B cell (primary cell): ENCODE measurements at regions of chr9 and their contacts with region 1.

Region 1: DNA sequence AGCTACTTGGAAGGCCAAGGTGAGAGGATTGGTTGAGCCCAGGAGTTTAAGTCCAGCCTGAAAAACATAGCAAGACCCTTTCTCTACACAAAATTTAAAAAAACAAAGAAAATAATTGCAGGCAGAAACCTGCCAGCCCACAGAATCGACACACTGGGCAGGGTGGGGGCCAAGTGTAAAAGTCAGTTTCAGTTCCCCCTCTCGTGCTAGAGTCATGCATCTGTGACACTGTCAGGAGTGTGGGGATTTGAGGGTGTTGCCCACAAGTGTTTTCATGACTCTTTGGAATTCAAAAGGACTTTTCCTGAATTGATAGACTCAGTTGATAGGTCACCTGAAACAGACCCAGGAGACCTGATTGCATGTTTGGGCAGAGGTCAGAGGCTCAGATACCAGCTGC is 47.6 kb downstream of the PRRC2B start:
- DNase-seq: peak; percentile 75
- ATAC-seq: peak; percentile 97
- H3K4me3 ChIP-seq: no peak overlapping the region
- H3K4me3 Mint-ChIP-seq: peak overlapping the region; percentile 11
- H3K27ac ChIP-seq: peak overlapping the region; percentile 13 to 70
- H3K27ac Mint-ChIP-seq: peak overlapping the region; percentile 76
- H3K4me1 ChIP-seq: peaks cover 19% of the 10 kb centered on the region in 2 donors
- H3K4me1 Mint-ChIP-seq: peaks cover 31% of the 10 kb centered on the region
- H3K27me3 ChIP-seq: no peaks in the 10 kb centered on the region
- H3K27me3 Mint-ChIP-seq: no peaks in the 10 kb centered on the region
- CTCF ChIP-seq: no peak

Region 2: DNA sequence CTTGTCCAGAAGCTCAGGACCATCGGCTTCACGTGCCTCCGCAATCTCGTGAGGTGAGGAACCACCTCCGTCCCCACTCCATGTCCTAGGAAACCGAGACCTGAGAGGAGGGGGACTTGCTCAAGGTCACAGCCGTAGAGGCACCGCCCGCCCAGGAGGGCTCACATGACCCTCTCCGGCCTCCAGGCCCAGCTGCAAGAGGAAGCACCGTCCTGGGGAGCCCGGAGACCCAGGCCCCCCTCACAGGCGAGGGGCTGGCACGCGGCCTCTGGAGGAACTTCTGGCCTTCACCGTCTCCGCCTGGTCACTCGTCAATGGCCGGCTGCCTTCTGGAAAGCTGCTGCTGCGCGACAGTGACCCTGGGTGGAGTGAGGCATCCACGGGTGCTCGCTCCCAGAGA is 189.3 kb before region 1 on chr9:
- CTCF ChIA-PET with region 1: no interaction called
- POLR2A ChIA-PET with region 1: no interaction called
- intact Hi-C with region 1: no loop called
- DNase-seq: no peak
- ATAC-seq: no peak
- H3K4me3 ChIP-seq: peak overlapping the region in 4 of 5 experiments; percentile 33 to 50 (median 36)
- H3K4me3 Mint-ChIP-seq: peak overlapping the region; percentile 78
- H3K27ac ChIP-seq: peak overlapping the region; percentile 42 to 95
- H3K27ac Mint-ChIP-seq: peak overlapping the region; percentile 32
- H3K4me1 ChIP-seq: peaks cover 48 to 57% of the 10 kb centered on the region in 2 donors
- H3K4me1 Mint-ChIP-seq: peaks cover 35% of the 10 kb centered on the region
- H3K27me3 ChIP-seq: no peaks in the 10 kb centered on the region
- H3K27me3 Mint-ChIP-seq: no peaks in the 10 kb centered on the region
- CTCF ChIP-seq: no peak

Region 3: GRCh38 chr9:131393622-131394463 is 47.6 kb before region 1 on chr9 and contains the start of gene PRRC2B:
- CTCF ChIA-PET with region 1: interaction called, 5 read pairs
- POLR2A ChIA-PET with region 1: interaction called, 3 read pairs
- intact Hi-C with region 1: loop called (anchors 5 kb)
- DNase-seq: peak; percentile 91
- ATAC-seq: peak; percentile 64
- H3K4me3 ChIP-seq: peak within 1 kb of the TSS; percentile 53 to 80 (median 72)
- H3K4me3 Mint-ChIP-seq: peak within 1 kb of the TSS; percentile 88
- H3K27ac ChIP-seq: peak within 1 kb of the TSS; percentile 74 to 82
- H3K27ac Mint-ChIP-seq: peak within 1 kb of the TSS; percentile 90
- H3K4me1 ChIP-seq: peaks cover 42 to 47% of the 10 kb centered on the region in 2 donors
- H3K4me1 Mint-ChIP-seq: peaks cover 46% of the 10 kb centered on the region
- H3K27me3 ChIP-seq: no peaks in the 10 kb centered on the region
- H3K27me3 Mint-ChIP-seq: no peaks in the 10 kb centered on the region
- CTCF ChIP-seq: peak; percentile 48
- total RNA-seq, gene PRRC2B: 256 and 268 TPM in 2 replicates

Region 4: DNA sequence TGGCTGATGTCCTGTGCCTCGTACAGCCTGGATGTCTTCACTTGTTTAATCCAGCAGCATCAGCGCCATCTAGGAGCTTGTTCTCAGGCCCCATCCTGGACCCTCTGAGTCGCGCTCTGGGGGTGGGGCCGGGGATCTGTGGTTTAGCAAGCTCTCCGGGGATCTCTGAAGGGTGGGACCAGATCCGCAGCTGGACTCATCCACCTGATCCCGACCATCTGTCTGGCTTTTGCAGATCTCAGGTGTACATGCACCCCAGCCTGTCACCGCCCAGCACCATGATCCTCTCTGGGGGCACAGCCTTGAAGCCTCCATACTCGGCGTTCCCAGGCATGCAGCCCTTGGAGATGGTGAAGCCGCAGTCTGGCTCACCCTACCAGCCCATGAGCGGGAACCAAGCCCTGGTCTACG is 46.2 kb after region 1 on chr9:
- CTCF ChIA-PET with region 1: no interaction called
- POLR2A ChIA-PET with region 1: no interaction called
- intact Hi-C with region 1: no loop called
- DNase-seq: no peak
- ATAC-seq: no peak
- H3K4me3 ChIP-seq: no peak overlapping the region
- H3K4me3 Mint-ChIP-seq: no peak overlapping the region
- H3K27ac ChIP-seq: no peak overlapping the region
- H3K27ac Mint-ChIP-seq: no peak overlapping the region
- H3K4me1 ChIP-seq: no peaks in the 10 kb centered on the region
- H3K4me1 Mint-ChIP-seq: no peaks in the 10 kb centered on the region
- H3K27me3 ChIP-seq: no peaks in the 10 kb centered on the region
- H3K27me3 Mint-ChIP-seq: no peaks in the 10 kb centered on the region
- CTCF ChIP-seq: no peak